Activated B cell treated with CpG ODN at 0.5 μM for 24 hours (primary cell): ENCODE measurements at regions of chrX and their contacts with region 1.

Region 1: DNA sequence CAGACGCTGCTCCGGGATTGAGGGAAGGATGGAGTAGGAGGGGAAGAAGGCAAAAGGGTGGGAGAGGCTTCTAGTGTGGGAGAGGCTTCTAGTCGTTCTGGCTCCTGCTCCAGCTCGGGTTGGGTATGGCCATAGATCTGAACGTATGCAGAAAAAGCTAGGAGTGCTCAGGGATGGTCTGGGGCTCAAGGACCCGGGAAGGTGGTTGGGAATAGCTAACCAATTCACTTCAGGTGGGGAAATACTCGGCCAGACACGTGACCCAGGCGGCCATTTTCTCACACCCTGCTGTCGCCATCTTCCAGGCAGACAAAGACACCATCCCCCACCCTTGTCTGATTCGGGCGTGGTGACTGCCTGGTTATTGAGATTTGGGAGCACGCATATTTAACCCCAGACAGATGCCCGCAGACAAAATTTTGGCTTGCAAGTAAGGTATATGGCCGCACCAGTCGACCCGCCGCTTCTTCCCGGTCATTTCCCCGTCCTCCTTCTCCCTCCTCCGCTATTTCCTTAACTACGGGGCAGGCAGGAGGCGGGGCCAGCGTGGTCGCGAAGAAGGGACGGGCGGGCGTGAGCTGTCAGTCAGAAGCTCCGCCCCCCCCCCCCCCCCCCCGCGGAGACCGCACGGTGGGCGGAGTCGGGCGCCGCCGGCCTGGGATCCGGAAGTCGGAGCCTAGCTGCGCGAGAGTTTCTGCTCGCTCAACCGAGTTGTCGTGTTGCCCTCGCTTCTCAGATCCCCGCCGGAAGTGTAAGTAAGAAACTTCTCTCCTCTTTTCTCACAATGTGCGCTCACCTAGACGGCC is at the start of gene GNL3L:
- DNase-seq: peak; percentile 66
- ATAC-seq: peak; percentile 83
- H3K4me3 Mint-ChIP-seq: peak within 1 kb of the TSS; percentile 94
- H3K27ac Mint-ChIP-seq: peak within 1 kb of the TSS; percentile 97
- H3K4me1 Mint-ChIP-seq: peaks cover 43% of the 10 kb centered on the region
- H3K27me3 Mint-ChIP-seq: no peaks in the 10 kb centered on the region
- CTCF ChIP-seq: no peak
- total RNA-seq, gene GNL3L: 67.1 and 70.5 TPM in 2 replicates

Region 2: DNA sequence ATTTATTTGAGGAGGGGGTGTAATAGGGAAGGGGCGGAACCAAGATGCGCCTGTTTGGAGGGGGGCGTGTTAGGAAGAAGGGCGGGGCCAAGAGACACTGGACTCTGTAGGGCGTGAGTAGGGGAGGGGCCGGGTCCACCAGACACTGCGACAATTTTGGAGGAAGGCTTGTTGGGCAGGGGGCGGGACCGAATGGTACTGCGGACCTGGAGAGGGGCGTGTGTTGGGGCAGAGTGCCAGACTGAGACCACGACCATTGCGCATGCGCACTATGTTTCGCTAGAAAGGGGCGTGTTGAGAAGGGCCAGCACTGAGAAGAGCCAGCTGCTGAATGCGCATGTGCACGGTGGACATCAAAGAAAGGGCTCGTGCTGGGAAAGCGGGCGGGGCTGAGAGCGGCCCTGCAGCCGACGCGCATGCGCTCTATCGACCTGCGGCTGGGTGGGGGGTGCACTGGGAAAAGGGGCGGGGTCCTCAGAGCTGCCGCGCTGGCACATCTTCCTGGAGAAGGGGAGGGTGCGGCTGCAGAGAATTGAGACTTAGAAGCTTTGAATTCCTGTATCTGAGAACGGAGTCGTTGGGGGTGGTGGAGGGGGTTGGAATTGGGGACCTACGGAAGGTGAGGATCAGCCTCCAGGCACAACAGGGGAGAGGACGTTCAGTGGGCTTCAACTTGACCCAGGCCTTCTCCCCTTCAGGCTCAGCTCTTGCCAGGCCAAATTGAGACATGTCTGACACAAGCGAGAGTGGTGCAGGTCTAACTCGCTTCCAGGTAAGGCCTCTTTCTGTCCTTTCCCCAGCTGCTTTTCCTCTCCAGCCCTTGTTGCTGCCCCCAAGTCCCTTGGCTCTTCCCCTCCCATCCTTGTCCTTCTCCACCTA is 279.1 kb after region 1 on chrX:
- CTCF ChIA-PET with region 1: no interaction called
- POLR2A ChIA-PET with region 1: interaction called, 4 read pairs
- intact Hi-C with region 1: loop called (anchors 1 kb)
- DNase-seq: peak; percentile 73
- ATAC-seq: peak; percentile 96
- H3K4me3 Mint-ChIP-seq: peak overlapping the region; percentile 92
- H3K27ac Mint-ChIP-seq: peak overlapping the region; percentile 91
- H3K4me1 Mint-ChIP-seq: peaks cover 14% of the 10 kb centered on the region
- H3K27me3 Mint-ChIP-seq: no peaks in the 10 kb centered on the region
- CTCF ChIP-seq: no peak